ENCODE measurements at regions of chr6 and their contacts with region 1.

Region 1: DNA sequence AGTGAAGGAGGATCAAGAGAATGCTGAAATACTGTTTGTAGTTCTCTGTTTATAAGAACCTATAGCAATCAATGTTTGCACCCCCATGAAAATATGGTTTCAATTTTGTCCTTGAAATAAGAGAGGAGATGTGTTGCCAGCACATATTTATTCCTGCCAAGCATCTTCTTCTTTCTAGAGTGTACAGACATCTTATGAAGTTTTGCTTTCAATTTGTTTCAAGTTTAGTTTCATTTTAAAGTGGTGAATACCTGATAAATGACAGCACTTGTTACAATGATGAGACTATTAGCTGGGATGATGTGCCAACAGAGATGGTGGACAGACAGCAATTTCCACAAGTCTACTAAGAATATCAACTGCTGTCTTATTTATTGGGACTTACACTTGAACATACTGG is 39.2 kb upstream of the CENPW start:
- DNase-seq: no peak
- H3K4me3 Mint-ChIP-seq: no peak overlapping the region
- H3K27ac Mint-ChIP-seq: no peak overlapping the region
- H3K4me1 Mint-ChIP-seq: peaks cover 23% of the 10 kb centered on the region
- H3K27me3 Mint-ChIP-seq: no peaks in the 10 kb centered on the region
- CTCF ChIP-seq: no peak

Region 2: GRCh38 chr6:126268092-126268491 is 32.6 kb before region 1 on chr6:
- CTCF ChIA-PET with region 1: no interaction called
- intact Hi-C with region 1: loop called (anchors 5 kb)
- DNase-seq: no peak
- H3K4me3 Mint-ChIP-seq: no peak overlapping the region
- H3K27ac Mint-ChIP-seq: no peak overlapping the region
- H3K4me1 Mint-ChIP-seq: peaks cover 9% of the 10 kb centered on the region
- H3K27me3 Mint-ChIP-seq: no peaks in the 10 kb centered on the region
- CTCF ChIP-seq: no peak

Measured in Calu3 (cell line).